Activated CD4-positive, alpha-beta memory T cell treated with anti-CD3 and anti-CD28 coated beads for 36 hours (primary cell): ENCODE measurements at regions of chr15 and their contacts with region 1.

Region 1: DNA sequence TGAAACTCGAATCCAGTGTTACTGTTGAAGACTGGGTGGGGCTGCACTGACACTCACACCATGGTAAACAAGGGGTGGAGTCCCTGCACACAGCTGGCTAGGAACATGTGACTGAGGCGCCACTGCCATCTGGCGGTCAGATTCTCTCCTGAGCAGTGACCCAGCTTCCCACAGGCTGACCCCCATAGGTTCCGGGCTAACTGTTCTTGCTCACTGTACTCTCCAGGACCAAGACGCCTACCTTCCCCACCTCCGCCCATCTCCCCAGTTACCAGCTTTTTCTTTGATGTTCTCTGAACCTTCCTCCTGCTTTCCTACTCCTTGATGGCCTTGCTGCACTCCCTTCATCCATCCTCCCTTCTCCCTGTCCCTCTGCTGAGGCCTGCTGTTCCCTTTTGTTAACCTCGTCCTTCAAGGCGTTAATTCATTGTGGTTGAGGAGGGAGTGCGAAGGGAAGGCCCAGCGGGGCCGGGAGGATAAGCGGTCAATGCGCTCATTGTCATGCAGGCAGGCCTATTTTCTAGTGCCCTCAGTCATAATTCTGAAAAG is 115.2 kb downstream of the ATP8B4 start:
- DNase-seq: peak; percentile 77
- H3K4me3 Mint-ChIP-seq: no peak overlapping the region
- H3K27ac Mint-ChIP-seq: no peak overlapping the region
- H3K4me1 Mint-ChIP-seq: peaks cover 7% of the 10 kb centered on the region
- H3K27me3 Mint-ChIP-seq: peaks cover 2% of the 10 kb centered on the region

Region 2: GRCh38 chr15:49814706-49815105 is 189.2 kb before region 1 on chr15:
- CTCF ChIA-PET with region 1: no interaction called
- POLR2A ChIA-PET with region 1: no interaction called
- intact Hi-C with region 1: no loop called
- DNase-seq: no peak
- H3K4me3 Mint-ChIP-seq: no peak overlapping the region
- H3K27ac Mint-ChIP-seq: no peak overlapping the region
- H3K4me1 Mint-ChIP-seq: no peaks in the 10 kb centered on the region
- H3K27me3 Mint-ChIP-seq: peaks cover 4% of the 10 kb centered on the region

Region 3: DNA sequence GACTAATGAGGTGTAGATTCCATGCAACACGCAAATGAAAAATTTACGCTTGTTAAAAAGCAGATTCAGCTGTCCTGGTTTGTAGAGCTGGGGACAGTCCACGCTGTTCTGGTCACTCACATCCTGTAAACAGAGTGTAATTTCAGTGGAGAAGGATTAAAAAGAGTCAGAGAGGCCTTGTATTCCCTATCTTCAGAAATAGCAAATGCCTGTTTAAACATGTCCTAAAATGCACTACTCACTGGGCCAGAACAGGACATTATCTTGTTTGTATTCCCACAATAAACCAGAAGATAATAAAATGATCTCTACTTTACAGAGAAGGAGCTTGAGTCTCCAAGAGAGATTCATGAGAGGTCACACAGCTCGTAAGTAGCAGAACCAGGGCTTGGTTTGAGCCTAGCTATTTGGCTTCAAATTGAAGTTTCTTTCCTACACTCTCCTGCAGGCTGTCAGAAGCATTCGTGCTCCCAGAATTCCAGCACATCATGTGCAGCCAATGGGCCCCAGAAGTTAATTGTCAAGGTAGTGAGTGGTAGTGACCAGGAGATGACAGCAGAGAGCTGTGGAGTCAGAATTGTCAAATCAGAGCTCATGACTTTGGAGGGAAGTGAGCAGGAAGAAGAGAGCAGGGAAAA is 127.3 kb before region 1 on chr15:
- CTCF ChIA-PET with region 1: interaction called, 19 read pairs
- POLR2A ChIA-PET with region 1: no interaction called
- intact Hi-C with region 1: no loop called
- DNase-seq: no peak
- H3K4me3 Mint-ChIP-seq: no peak overlapping the region
- H3K27ac Mint-ChIP-seq: no peak overlapping the region
- H3K4me1 Mint-ChIP-seq: no peaks in the 10 kb centered on the region
- H3K27me3 Mint-ChIP-seq: peaks cover 2% of the 10 kb centered on the region

Region 4: GRCh38 chr15:49962044-49962602 is 41.7 kb before region 1 on chr15:
- CTCF ChIA-PET with region 1: no interaction called
- POLR2A ChIA-PET with region 1: no interaction called
- intact Hi-C with region 1: no loop called
- DNase-seq: no peak
- H3K4me3 Mint-ChIP-seq: no peak overlapping the region
- H3K27ac Mint-ChIP-seq: no peak overlapping the region
- H3K4me1 Mint-ChIP-seq: no peaks in the 10 kb centered on the region
- H3K27me3 Mint-ChIP-seq: no peaks in the 10 kb centered on the region

Region 5: GRCh38 chr15:50162988-50163718 is 159.3 kb after region 1 on chr15:
- CTCF ChIA-PET with region 1: no interaction called
- POLR2A ChIA-PET with region 1: no interaction called
- intact Hi-C with region 1: no loop called
- DNase-seq: no peak
- H3K4me3 Mint-ChIP-seq: no peak overlapping the region
- H3K27ac Mint-ChIP-seq: no peak overlapping the region
- H3K4me1 Mint-ChIP-seq: peaks cover 13% of the 10 kb centered on the region
- H3K27me3 Mint-ChIP-seq: peaks cover 5% of the 10 kb centered on the region